ENCODE measurements at regions of chrX and their contacts with region 1.

Region 1: GRCh38 chrX:23525531-23525930 is 141.8 kb upstream of the PRDX4 start:
- DNase-seq: no peak
- ATAC-seq: no peak

Region 2: GRCh38 chrX:23333842-23334520 is 191.6 kb before region 1 on chrX:
- intact Hi-C with region 1: no loop called
- DNase-seq: no peak
- ATAC-seq: no peak

Region 3: DNA sequence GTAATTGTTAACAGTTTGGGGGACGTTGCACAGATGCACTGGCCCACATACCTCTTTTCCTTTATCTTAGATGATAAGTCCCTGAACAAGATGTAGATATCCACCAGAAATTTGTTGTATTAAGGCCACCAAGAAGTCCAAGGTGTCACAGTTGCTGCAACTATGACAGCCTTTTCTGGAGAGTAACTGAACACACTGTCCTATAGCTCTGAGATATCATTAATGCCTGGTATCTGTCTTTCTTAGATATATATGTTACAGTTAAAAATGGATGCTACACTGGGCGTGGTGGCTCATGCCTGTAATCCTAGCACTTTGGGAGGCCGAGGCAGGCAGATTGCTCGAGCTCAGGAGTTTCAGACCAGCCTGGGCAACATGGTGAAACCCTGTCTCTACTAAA is 64.0 kb after region 1 on chrX:
- intact Hi-C with region 1: loop called (anchors 10 kb)
- DNase-seq: no peak
- ATAC-seq: no peak

Measured in Right ventricle myocardium superior (tissue), 1 donor.